Esophagus muscularis mucosa (tissue), 4 donors: ENCODE measurements at regions of chr5 and their contacts with region 1.

Region 1: DNA sequence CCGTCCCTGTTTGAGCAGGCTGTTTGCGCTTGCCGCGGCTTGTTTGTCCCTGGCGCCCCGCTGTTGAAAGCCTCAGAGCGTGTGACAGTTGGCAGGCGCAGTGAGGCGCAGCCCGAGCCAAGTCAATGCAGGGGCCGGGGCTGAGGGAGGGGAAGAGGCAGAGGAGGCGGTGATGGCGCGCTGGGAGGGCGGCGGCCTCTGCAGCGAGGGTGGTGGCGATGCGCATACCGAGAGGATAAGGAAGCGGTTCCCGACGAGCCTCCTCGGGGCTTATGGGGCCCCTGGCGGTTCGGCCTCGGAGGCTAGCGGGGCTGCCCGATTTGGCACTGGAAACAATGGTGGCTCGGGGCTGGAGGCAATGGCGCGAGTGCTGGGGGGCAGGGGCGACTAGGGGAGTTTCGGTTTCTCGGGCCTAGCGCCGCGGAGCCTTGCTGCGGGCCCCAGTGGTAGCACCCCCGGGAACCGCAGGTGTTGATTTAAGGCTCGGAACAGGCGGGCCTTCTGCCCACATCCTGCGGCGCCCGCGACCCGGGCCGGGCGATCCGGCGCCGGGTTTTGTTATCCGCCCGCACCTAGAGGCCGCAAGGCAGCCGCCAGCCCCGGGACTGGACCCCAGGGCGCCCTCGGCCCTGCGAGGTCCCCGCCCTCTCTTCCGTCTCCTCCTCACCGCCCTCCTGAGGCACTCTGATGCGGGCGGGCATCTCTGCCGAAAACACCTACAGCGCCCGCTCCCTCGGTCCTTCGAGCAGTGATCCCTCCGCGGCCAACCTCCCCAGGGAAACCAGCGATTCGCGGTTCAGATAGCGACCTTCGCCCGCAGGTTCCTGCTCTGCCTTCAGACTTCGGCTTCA is 947 bp upstream of the LNPEP start:
- DNase-seq: peak; percentile 97
- H3K4me3 ChIP-seq: peak overlapping the region; percentile 87 to 95 (median 92)
- H3K27ac ChIP-seq: peak overlapping the region; percentile 97 to 98 (median 98)
- H3K4me1 ChIP-seq: peaks cover 42 to 56% (median 55%) of the 10 kb centered on the region in 4 donors
- H3K27me3 ChIP-seq: no peaks in the 10 kb centered on the region
- CTCF ChIP-seq: peak in 1 of 3 experiments; percentile 14
- EP300 ChIP-seq: no peak
- POLR2A ChIP-seq: peak; percentile 55

Region 2: DNA sequence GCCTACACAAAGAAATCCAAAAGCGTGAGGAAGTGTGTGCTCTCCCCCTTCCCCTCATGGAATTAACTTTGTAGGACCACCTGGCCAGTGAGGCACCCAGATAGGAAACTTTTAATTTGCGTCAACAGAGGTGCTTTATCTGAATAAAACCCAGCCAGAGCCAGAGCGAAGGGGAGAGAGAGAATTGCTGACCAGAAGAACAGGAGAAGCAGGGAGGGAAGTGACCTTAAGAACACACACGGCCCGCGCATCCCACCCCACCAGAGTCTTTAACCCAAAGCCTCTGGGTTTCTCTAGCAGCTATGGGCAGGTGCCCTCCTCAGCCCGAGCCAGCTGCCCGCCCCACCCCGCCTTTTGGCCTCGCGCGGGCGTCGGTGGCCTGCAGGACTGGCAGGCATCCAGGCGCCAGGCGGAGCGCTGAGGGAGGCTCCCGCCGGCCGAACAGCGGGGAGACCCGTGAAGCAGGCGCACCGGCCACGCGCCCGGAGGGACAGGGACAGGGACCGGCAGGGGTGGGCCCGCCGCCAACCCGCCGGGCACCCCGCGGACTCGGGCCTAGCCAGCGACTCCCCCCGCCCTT is 127.8 kb before region 1 on chr5:
- intact Hi-C with region 1: loop called (anchors 5 kb)
- DNase-seq: no peak
- H3K4me3 ChIP-seq: peak overlapping the region; percentile 92 to 95 (median 94)
- H3K27ac ChIP-seq: peak overlapping the region; percentile 99 to 100 (median 100)
- H3K4me1 ChIP-seq: peaks cover 7 to 38% (median 29%) of the 10 kb centered on the region in 4 donors
- H3K27me3 ChIP-seq: no peaks in the 10 kb centered on the region
- CTCF ChIP-seq: no peak
- EP300 ChIP-seq: no peak
- POLR2A ChIP-seq: peak; percentile 33

Region 3: GRCh38 chr5:96876292-96876850 is 58.6 kb before region 1 on chr5 and contains the start of gene ERAP2:
- intact Hi-C with region 1: loop called (anchors 5 kb)
- DNase-seq: peak; percentile 79
- H3K4me3 ChIP-seq: peak within 1 kb of the TSS; percentile 64 to 76 (median 69)
- H3K27ac ChIP-seq: peak within 1 kb of the TSS; percentile 59 to 79 (median 74)
- H3K4me1 ChIP-seq: peaks cover 7 to 27% (median 24%) of the 10 kb centered on the region in 4 donors
- H3K27me3 ChIP-seq: no peaks in the 10 kb centered on the region
- CTCF ChIP-seq: no peak
- EP300 ChIP-seq: no peak
- POLR2A ChIP-seq: no peak
- total RNA-seq, gene ERAP2: 6.6 to 12.3 (median 7.3) TPM

Region 4: GRCh38 chr5:97281257-97281656 is 346.3 kb after region 1 on chr5:
- intact Hi-C with region 1: no loop called
- DNase-seq: no peak
- H3K4me3 ChIP-seq: no peak overlapping the region
- H3K27ac ChIP-seq: no peak overlapping the region
- H3K4me1 ChIP-seq: no peaks in the 10 kb centered on the region
- H3K27me3 ChIP-seq: no peaks in the 10 kb centered on the region
- CTCF ChIP-seq: no peak
- EP300 ChIP-seq: no peak
- POLR2A ChIP-seq: no peak